Activated T-helper 1 cell treated with anti-CD3 and anti-CD28 coated beads, Interleukin-12 subunit alpha, Interleukin-12 subunit beta, Interleukin-2, Interleukin-4 antibody, amounts not matched to agents 30 ng/mL and 10 ng/mL and 1 ng/mL, durations not matched to agents 14 hours and 24 hours and 36 hours (primary cell): ENCODE measurements at regions of chr14 and their contacts with region 1.

Region 1: DNA sequence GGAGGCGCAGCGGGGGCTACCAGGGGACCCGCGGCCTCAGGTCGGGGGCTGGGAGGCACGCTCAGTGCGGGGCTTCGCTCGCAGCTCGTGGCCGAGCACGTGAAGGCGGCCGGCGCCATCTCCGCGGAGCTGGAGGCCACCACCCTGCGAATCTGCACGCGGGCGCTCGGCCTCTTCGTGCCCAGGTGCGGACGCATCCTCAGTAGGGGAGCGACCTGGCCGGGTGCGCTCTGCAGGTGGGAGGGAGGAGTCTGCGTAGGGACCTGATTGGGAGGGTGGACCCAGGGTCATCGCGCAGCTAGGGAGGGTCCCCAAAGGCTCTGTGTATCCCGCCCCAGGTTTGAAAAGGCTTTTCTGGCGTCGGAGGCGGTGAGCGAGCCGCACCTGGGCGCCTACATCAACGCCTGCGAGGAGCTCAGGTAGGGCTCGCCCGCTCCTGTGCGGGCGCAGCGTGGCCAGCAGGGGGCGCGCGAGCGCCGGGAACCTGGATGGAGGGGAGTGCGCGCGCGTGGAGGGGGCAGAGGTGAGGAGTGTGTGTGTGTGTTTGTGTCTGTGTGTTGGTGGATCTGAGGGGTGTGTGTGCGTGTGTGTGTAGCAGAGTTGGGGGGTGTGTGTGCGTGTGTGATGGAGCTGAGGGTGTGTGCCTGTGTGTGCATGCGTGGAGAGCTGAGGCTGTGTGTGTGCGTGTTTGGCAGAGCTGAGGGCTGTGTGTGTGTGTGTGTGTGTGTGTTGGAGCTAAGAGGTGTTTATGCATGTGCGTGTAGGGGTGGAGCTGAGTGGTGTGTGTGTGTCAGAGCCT is 10.3 kb downstream of the EXOC3L4 start:
- DNase-seq: peak; percentile 65
- H3K4me3 Mint-ChIP-seq: no peak overlapping the region
- H3K27ac Mint-ChIP-seq: no peak overlapping the region
- H3K4me1 Mint-ChIP-seq: peaks cover 5% of the 10 kb centered on the region
- H3K27me3 Mint-ChIP-seq: peaks cover 38% of the 10 kb centered on the region

Region 2: GRCh38 chr14:103141119-103141796 is 36.4 kb after region 1 on chr14:
- intact Hi-C with region 1: loop called (anchors 2 kb)
- DNase-seq: no peak
- H3K4me3 Mint-ChIP-seq: no peak overlapping the region
- H3K27ac Mint-ChIP-seq: no peak overlapping the region
- H3K4me1 Mint-ChIP-seq: peaks cover 4% of the 10 kb centered on the region
- H3K27me3 Mint-ChIP-seq: peaks cover 9% of the 10 kb centered on the region

Region 3: DNA sequence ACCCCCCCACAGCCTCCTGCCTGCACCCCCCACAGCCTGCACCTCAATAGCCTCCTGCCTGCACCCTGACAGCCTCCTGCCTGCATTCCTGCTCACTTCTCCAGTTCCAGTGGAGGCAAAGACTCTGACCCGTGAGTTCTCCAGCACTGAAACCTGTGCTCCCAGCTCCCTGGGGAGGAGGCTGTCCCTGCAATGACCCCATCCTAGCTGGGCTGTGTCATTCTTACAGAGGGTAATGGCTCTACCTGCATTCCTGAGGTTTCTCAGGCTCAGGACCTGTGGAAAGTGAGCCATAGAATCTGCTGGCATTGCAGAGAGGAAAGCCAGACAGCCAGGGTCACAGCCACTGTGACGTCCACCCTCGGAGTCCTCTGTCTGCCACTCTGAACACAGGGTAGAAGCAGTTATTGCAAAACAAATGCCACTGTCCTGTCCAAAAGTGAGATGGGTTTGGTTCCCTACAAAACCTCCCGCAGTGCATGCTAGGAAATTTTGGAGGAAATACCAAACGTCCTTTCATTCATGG is 56.1 kb after region 1 on chr14:
- intact Hi-C with region 1: no loop called
- DNase-seq: no peak
- H3K4me3 Mint-ChIP-seq: no peak overlapping the region
- H3K27ac Mint-ChIP-seq: no peak overlapping the region
- H3K4me1 Mint-ChIP-seq: no peaks in the 10 kb centered on the region
- H3K27me3 Mint-ChIP-seq: no peaks in the 10 kb centered on the region

Region 4: DNA sequence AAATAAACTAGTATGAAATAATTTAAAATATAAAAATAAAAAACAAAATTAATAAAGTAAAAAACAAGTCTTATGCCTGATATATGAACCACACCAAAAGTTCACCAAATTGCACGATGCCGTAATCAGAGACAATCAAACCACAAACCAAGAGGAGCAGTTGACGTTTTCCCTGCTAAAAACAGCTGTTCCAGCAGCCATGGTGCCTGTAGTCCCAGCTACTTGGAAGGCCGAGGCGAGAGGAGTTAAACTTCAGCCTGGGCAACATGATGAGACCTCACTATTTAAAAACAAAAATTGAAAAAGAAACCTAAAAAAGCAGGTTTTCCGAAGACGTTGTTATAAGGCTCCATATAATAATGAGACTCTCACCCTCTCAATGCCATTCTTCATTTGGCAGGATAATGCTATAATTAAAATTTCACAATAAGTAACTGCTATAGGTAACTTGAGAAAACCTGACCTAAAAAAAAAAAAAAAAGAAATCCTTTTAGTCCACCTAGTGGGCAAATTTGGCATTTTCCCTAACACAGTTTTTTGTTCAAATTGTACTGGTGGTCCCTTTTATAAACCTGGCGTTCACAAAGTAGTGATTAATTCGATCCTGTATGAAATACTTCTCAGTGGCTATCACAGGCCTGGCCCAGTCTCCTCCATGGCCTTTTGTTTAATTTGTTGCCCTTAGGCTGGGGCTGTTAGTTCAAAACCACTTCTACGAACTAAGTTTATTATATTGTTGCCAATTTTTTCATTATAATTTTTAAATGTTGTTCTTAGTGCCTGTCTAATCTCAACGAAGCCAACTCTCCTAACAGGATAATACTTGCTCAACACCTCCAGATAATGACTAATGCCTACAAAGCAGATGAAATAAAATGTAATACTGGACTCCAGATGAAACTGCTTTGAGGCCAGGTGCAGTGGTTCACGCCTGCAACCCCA is 80.5 kb after region 1 on chr14:
- intact Hi-C with region 1: loop called (anchors 1 kb)
- DNase-seq: no peak
- H3K4me3 Mint-ChIP-seq: no peak overlapping the region
- H3K27ac Mint-ChIP-seq: no peak overlapping the region
- H3K4me1 Mint-ChIP-seq: no peaks in the 10 kb centered on the region
- H3K27me3 Mint-ChIP-seq: peaks cover 40% of the 10 kb centered on the region

Region 5: DNA sequence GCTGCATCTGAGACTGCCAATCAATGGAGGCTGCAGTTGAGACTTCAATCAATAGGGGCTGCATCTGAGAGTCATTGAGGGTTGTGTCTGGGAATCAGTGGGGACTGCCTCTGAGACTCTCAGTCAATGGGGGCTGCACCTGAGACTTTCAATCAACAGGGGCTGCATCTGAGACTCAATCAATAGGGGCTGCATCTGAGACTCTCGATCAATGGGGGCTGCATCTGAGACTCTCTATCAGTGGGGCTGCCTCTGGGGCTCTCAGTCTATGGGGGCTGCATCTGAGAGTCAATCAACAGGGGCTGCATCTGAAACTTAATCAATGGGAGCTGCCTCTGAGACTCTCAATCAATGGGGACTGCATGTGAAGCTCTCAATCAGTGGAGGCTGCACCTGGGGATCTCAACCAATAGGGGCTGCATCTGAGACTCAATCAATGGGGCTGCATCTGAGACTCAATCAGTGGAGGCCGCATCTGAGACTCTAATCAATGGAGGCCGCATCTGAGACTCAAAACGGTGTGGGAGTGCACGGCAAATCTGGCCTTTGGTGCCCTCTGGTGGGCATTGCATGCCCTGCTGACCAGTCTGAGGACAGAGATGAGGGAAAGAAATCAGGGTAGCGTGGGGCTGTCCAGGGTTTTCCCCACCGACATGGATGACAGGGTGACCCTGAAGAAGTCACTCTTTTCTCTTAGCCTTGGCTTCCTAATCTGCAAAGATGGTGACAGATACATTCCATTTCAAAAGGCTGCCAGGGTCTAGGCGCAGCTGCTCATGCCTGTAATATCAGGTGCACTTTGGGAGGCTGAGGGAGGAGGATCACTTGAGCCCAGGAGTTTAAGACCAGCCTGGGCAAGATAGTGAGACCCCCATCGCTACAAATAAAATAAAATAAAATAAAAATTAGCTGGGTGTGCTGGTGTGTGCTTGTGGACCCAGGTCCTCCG is 187.8 kb after region 1 on chr14:
- intact Hi-C with region 1: loop called (anchors 1 kb)
- DNase-seq: peak; percentile 55
- H3K4me3 Mint-ChIP-seq: no peak overlapping the region
- H3K27ac Mint-ChIP-seq: no peak overlapping the region
- H3K4me1 Mint-ChIP-seq: no peaks in the 10 kb centered on the region
- H3K27me3 Mint-ChIP-seq: peaks cover 10% of the 10 kb centered on the region